B cell (primary cell): ENCODE measurements at regions of chr5 and their contacts with region 1.

Region 1: DNA sequence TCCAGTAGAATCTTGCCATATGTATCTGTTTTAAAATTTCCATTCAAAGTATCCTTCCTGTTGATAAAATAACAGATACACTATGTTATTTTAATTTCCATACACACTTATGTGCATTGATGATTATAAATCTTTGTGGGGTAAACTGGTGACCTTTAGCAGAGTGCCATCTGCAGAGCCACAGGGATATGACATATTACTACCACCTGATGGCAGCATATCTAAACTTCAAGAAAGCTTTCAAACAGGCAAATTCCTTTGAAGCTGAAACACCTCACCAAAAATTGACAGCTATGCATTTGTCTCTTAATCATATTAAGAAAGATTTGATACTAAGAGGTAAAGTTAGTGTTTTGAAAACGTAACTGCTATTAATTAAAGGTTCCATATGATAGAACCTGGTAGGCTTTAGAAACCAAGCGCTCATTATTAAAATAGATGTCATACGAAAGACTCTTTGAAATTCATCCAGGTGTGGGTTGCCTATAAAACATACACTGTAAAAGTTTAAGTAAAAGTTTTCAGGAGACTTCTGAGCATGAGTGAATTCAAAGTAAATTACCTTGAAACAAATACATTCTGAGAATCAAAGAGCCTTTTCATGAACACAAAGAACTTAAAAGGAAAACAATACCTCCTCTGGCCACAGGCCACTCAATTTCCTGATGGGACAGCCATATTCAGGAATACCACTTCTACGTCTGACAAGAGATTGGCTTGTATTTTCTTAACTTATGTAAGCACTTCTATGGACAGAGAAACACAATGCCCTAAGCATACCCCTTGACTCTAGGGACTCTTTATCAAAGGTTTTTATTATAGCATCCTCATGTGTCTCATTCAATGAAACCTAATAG is 93.3 kb downstream of the KIAA0825 start:
- DNase-seq: peak; percentile 49
- ATAC-seq: peak; percentile 49
- H3K4me3 ChIP-seq: no peak overlapping the region
- H3K4me3 Mint-ChIP-seq: no peak overlapping the region
- H3K27ac ChIP-seq: no peak overlapping the region
- H3K27ac Mint-ChIP-seq: no peak overlapping the region
- H3K4me1 ChIP-seq: no peaks in the 10 kb centered on the region
- H3K4me1 Mint-ChIP-seq: no peaks in the 10 kb centered on the region
- H3K27me3 ChIP-seq: no peaks in the 10 kb centered on the region
- H3K27me3 Mint-ChIP-seq: no peaks in the 10 kb centered on the region
- CTCF ChIP-seq: peak; percentile 68

Region 2: GRCh38 chr5:94577466-94578245 is 52.6 kb after region 1 on chr5:
- CTCF ChIA-PET with region 1: no interaction called
- POLR2A ChIA-PET with region 1: no interaction called
- intact Hi-C with region 1: no loop called
- DNase-seq: peak; percentile 1
- ATAC-seq: no peak
- H3K4me3 ChIP-seq: no peak overlapping the region
- H3K4me3 Mint-ChIP-seq: peak overlapping the region; percentile 10
- H3K27ac ChIP-seq: no peak overlapping the region
- H3K27ac Mint-ChIP-seq: no peak overlapping the region
- H3K4me1 ChIP-seq: peaks cover 8 to 16% of the 10 kb centered on the region in 2 donors
- H3K4me1 Mint-ChIP-seq: peaks cover 23% of the 10 kb centered on the region
- H3K27me3 ChIP-seq: no peaks in the 10 kb centered on the region
- H3K27me3 Mint-ChIP-seq: no peaks in the 10 kb centered on the region
- CTCF ChIP-seq: no peak

Region 3: DNA sequence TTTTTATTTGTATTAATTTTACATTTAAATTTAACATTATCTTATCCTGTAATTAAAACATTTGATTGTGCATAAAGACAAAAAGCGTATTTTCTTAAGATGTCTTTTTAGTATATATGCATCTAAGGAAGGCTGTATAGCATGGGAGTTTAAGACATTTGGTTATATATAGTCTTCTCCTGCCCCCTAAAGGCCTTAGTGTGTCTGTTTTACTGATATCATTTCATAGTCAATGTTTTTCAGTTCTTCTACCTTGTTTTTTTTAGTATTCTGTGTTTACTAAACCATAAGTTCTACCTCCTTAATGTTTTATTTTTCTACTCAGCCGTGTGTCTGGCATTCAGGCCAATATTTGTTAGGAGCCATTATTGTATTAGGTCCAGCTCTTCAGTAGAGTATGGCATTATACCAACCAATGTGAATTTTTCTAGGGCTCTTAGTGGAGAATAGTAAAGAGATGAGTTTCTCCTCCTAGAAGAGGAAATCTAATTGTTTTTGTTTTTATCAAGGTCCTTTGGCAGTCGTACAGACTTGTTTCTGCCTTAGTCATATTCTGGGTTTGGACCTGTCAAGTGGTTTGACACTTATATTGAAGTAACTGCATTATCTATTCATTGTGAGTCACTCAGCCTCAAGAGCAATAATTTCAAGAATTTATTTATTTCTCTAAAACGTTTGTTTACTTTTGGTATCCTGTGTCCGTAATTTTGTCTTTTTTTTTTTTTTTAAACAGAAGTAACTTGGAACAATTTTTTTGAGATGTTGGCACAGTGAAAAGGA is 168.2 kb after region 1 on chr5:
- CTCF ChIA-PET with region 1: interaction called, 11 read pairs
- POLR2A ChIA-PET with region 1: no interaction called
- intact Hi-C with region 1: loop called (anchors 2 kb)
- DNase-seq: peak; percentile 61
- ATAC-seq: no peak
- H3K4me3 ChIP-seq: no peak overlapping the region
- H3K4me3 Mint-ChIP-seq: no peak overlapping the region
- H3K27ac ChIP-seq: no peak overlapping the region
- H3K27ac Mint-ChIP-seq: no peak overlapping the region
- H3K4me1 ChIP-seq: no peaks in the 10 kb centered on the region
- H3K4me1 Mint-ChIP-seq: no peaks in the 10 kb centered on the region
- H3K27me3 ChIP-seq: no peaks in the 10 kb centered on the region
- H3K27me3 Mint-ChIP-seq: no peaks in the 10 kb centered on the region
- CTCF ChIP-seq: peak; percentile 68

Region 4: DNA sequence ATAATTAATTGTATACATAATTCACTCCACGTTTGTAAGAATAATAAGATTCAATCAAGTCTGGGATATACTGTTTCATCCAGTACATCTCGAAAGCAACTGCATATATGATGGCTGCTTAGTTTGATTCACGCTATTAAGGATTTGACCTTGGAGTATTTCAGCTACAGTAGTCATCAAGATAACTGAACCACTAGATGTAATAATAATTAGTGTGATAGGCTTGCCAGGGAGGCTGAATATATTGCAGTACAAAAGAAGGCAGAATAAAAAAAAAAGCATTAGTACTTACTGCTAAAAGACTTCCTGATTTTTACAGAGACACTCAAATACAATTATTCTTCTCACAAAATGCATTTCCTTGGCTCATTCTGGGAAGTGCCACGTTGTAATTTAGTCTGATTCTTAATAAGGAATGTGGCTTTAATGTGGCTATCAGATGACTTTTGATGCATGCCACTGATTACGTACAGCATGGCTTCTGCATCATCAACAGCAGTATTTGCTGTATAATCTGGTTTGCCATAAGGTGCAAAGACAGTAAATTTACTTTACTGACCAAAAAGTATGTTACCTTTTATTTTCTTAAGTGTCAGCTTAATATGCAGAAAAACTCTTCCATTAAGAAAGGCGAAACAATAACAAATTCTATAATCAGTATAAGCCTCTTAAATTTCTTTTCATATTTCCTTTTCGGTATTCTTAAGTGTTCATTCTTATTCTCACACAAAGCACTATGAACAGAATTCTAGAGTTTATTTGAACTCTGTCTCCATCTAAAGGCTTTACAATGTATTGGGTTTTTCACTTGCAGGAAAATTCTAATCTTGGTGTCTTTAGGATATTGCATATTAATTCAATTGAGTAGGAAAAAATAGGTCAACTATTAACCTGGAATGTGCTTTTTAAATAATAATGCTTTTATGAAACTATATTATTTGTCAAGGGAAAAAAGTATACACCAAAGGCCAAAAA is 259.8 kb after region 1 on chr5:
- CTCF ChIA-PET with region 1: interaction called, 7 read pairs
- POLR2A ChIA-PET with region 1: no interaction called
- intact Hi-C with region 1: loop called (anchors 1 kb)
- DNase-seq: no peak
- ATAC-seq: no peak
- H3K4me3 ChIP-seq: no peak overlapping the region
- H3K4me3 Mint-ChIP-seq: no peak overlapping the region
- H3K27ac ChIP-seq: no peak overlapping the region
- H3K27ac Mint-ChIP-seq: no peak overlapping the region
- H3K4me1 ChIP-seq: no peaks in the 10 kb centered on the region
- H3K4me1 Mint-ChIP-seq: no peaks in the 10 kb centered on the region
- H3K27me3 ChIP-seq: no peaks in the 10 kb centered on the region
- H3K27me3 Mint-ChIP-seq: no peaks in the 10 kb centered on the region
- CTCF ChIP-seq: no peak

Region 5: GRCh38 chr5:94849821-94850736 is 325.0 kb after region 1 on chr5:
- CTCF ChIA-PET with region 1: interaction called, 10 read pairs
- POLR2A ChIA-PET with region 1: no interaction called
- intact Hi-C with region 1: loop called (anchors 1 kb)
- DNase-seq: peak; percentile 41
- ATAC-seq: peak; percentile 76
- H3K4me3 ChIP-seq: no peak overlapping the region
- H3K4me3 Mint-ChIP-seq: no peak overlapping the region
- H3K27ac ChIP-seq: no peak overlapping the region
- H3K27ac Mint-ChIP-seq: no peak overlapping the region
- H3K4me1 ChIP-seq: no peaks in the 10 kb centered on the region
- H3K4me1 Mint-ChIP-seq: peaks cover 3% of the 10 kb centered on the region
- H3K27me3 ChIP-seq: no peaks in the 10 kb centered on the region
- H3K27me3 Mint-ChIP-seq: no peaks in the 10 kb centered on the region
- CTCF ChIP-seq: peak; percentile 64